HEK293 (cell line): ENCODE measurements at regions of chr17 and their contacts with region 1.

Region 1: GRCh38 chr17:10618202-10618635 is 38.9 kb downstream of the MYH3 start:
- H3K4me3 ChIP-seq: no peak overlapping the region
- H3K27ac ChIP-seq: no peak overlapping the region
- H3K4me1 ChIP-seq: peaks cover 4% of the 10 kb centered on the region; the same call in 1 of the 2 replicates
- CTCF ChIP-seq: peak; percentile 82

Region 2: DNA sequence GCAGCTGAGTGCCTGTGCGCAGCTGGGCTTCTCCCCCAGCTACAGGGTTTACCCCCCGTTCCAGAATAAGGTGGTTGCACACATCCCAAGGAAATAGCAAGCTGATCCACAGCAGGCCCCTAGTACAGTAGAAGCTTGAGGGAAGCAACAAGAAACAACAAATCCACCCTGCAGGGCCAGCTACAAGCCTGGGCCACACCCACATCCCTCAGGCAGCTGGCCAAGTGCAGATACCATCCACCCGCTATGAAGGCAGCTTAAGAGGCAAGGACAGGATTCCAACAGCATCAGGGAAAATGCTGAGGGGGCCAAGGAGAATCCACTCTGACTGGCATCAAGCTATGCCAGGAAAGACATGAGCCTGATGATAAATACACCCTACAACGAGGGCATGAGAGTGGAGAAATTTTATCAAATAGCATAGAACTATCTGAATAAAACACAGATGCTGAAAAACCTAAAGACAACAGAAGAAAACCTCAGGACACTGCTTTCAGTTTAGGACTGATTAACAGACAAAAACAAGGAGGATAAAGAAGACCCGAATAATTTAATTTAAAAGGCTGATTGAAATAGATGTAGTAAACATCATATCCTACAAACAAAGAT is 646.1 kb before region 1 on chr17:
- CTCF ChIA-PET with region 1: interaction called, 14 read pairs
- POLR2A ChIA-PET with region 1: no interaction called
- H3K4me3 ChIP-seq: no peak overlapping the region
- H3K27ac ChIP-seq: peak overlapping the region; percentile 60
- H3K4me1 ChIP-seq: peaks cover 25% of the 10 kb centered on the region
- CTCF ChIP-seq: no peak

Region 3: GRCh38 chr17:10309003-10309834 is 309.0 kb before region 1 on chr17:
- CTCF ChIA-PET with region 1: interaction called, 164 read pairs
- POLR2A ChIA-PET with region 1: no interaction called
- H3K4me3 ChIP-seq: no peak overlapping the region
- H3K27ac ChIP-seq: no peak overlapping the region
- H3K4me1 ChIP-seq: no peaks in the 10 kb centered on the region
- CTCF ChIP-seq: no peak

Region 4: DNA sequence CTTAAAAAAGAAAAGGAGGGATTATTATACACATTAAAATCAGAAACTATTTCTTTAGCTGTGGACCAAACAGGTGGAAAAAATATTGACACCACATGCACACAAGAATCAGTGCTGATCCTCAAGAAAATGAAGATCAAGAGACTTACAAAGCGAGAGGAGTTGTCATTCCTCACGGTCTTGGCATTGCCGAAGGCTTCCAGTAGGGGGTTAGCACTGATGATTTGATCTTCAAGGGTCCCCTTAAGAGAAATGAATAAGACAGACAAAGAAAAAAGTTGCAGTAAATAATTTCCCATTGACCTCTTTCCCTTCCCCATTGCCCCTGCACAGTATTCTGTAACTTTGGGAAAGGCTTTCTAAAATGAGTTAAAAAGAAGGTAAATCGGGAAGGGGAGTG is 154.8 kb before region 1 on chr17:
- CTCF ChIA-PET with region 1: interaction called, 17 read pairs
- POLR2A ChIA-PET with region 1: no interaction called
- H3K4me3 ChIP-seq: no peak overlapping the region
- H3K27ac ChIP-seq: no peak overlapping the region
- H3K4me1 ChIP-seq: no peaks in the 10 kb centered on the region; the same call in 1 of the 2 replicates
- CTCF ChIP-seq: no peak

Region 5: DNA sequence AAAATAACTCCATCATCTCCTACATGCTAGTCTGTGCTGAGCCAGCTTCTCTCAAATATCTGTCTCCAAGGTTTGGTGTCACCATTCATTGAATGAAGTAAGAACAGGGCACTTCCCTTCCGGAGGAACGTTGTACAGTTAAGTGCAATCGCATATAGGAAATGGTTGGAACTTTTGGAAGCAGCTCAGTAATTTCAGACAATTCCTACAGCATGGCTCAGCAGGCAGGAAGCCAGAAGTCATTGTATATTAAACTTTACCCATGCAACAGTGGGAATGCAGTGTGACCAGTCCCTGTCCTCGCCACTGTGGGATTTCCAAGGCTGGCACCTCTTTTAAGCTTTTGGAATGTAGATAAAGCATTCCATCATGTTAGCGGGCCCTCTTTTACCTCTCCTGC is 17.6 kb before region 1 on chr17:
- CTCF ChIA-PET with region 1: interaction called, 45 read pairs
- POLR2A ChIA-PET with region 1: no interaction called
- H3K4me3 ChIP-seq: no peak overlapping the region
- H3K27ac ChIP-seq: no peak overlapping the region
- H3K4me1 ChIP-seq: 0 out of 2 replicates have a peak, but pooled peaks cover 3% of the 10 kb centered on the region
- CTCF ChIP-seq: no peak